Esophagus muscularis mucosa (tissue), 4 donors: ENCODE measurements at regions of chr5 and their contacts with region 1.

Region 1: GRCh38 chr5:91419571-91420537 is 36.7 kb upstream of the ARRDC3 start:
- DNase-seq: no peak
- H3K4me3 ChIP-seq: no peak overlapping the region
- H3K27ac ChIP-seq: no peak overlapping the region
- H3K4me1 ChIP-seq: no peaks in the 10 kb centered on the region
- H3K27me3 ChIP-seq: no peaks in the 10 kb centered on the region
- CTCF ChIP-seq: peak; percentile 69 to 79 (median 72)
- EP300 ChIP-seq: no peak
- POLR2A ChIP-seq: no peak

Region 2: DNA sequence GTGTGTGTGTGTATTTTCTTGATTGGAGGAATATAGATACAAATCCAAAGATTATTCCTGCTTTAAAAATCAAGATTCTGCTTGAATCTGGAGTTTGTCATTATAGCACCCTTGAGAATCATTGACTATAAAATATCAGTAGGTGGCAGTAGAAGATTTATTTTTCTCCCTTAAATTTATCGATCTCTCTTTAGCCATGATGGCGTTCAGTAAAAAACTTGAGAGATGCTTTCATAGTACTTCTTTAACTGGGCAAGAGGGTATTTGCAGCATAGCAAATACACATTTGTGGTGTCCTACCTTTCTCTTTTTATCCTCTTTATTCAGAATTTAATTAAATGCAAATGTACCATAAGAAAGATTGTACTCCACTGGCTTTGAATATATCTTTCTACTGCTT is 553.5 kb before region 1 on chr5:
- intact Hi-C with region 1: loop called (anchors 2 kb)
- DNase-seq: no peak
- H3K4me3 ChIP-seq: no peak overlapping the region
- H3K27ac ChIP-seq: no peak overlapping the region
- H3K4me1 ChIP-seq: peaks cover 0 to 6% (median 1%) of the 10 kb centered on the region in 4 donors
- H3K27me3 ChIP-seq: peaks cover 0 to 4% (median 0%) of the 10 kb centered on the region in 4 donors
- CTCF ChIP-seq: peak; percentile 50 to 57 (median 56)
- EP300 ChIP-seq: no peak
- POLR2A ChIP-seq: no peak

Region 3: DNA sequence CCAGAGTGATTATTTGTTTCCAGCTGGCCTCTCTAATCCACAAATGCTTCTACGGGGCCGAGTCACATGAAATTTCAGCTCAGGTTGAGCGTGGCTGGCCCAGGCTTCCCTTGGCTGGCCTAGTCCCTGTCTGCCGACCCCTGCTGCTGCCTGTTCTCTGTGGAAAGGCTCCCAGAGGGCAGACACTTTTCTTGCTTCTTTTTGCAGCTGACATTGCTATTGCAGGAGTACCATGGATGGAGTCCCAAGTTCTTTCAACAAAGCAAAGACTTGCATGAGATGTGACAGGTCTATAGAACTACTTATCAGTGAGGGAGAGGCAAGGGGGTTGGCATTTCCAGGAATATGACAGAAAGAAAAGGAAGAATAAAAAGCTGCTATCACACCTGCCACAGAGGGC is 250.7 kb after region 1 on chr5:
- intact Hi-C with region 1: no loop called
- DNase-seq: no peak
- H3K4me3 ChIP-seq: no peak overlapping the region
- H3K27ac ChIP-seq: no peak overlapping the region
- H3K4me1 ChIP-seq: no peaks in the 10 kb centered on the region
- H3K27me3 ChIP-seq: no peaks in the 10 kb centered on the region
- CTCF ChIP-seq: no peak
- EP300 ChIP-seq: no peak
- POLR2A ChIP-seq: no peak